Left colon (tissue), 2 donors: ENCODE measurements at regions of chr15 and their contacts with region 1.

Region 1: GRCh38 chr15:80769829-80770705 is 9.1 kb upstream of the CEMIP start:
- DNase-seq: no peak
- ATAC-seq: no peak

Region 2: DNA sequence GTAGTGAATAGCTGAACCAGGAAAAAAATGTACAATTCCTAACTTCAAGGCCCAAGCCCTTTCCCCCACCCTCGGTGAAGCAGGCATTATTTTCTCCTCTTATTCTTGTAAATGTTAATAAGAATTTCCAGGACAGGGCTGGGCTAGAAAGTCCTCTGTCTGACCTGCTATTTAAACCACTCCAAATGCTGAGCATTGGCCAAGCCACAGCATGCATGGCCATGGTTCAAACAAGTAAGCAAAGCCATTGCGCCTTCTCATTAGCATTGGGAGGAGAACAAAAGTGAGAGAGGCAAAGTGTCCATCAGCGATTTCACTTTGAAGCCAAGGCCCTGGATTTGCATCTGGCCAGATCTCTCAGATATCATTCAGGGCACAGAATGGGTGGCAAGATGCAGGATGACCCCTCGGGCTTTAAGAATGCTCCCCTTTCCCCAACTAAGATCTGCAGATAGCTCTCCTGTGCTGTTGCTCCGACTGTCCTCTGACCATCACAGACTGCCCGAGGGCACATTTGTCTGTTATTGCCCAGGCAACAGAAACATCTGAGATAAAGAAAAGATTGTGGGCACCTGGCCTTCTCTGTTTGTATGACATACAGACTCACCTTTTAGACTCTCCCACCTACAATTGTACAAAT is 55.4 kb after region 1 on chr15:
- intact Hi-C with region 1: loop called in 1 of 2 experiments (anchors 10 kb)
- DNase-seq: no peak
- ATAC-seq: no peak